Activated naive CD8-positive, alpha-beta T cell treated with anti-CD3 and anti-CD28 coated beads, Interleukin-2, amount 10 ng/mL, durations not matched to agents 7 days and 5 days (primary cell): ENCODE measurements at regions of chr12 and their contacts with region 1.

Region 1: GRCh38 chr12:14769969-14770495 is 33.2 kb downstream of the WBP11 start:
- DNase-seq: peak; percentile 89
- ATAC-seq: peak; percentile 43
- H3K4me3 Mint-ChIP-seq: peak overlapping the region; percentile 94
- H3K27ac Mint-ChIP-seq: peak overlapping the region; percentile 99
- H3K4me1 Mint-ChIP-seq: peaks cover 34% of the 10 kb centered on the region
- H3K27me3 Mint-ChIP-seq: no peaks in the 10 kb centered on the region

Region 2: DNA sequence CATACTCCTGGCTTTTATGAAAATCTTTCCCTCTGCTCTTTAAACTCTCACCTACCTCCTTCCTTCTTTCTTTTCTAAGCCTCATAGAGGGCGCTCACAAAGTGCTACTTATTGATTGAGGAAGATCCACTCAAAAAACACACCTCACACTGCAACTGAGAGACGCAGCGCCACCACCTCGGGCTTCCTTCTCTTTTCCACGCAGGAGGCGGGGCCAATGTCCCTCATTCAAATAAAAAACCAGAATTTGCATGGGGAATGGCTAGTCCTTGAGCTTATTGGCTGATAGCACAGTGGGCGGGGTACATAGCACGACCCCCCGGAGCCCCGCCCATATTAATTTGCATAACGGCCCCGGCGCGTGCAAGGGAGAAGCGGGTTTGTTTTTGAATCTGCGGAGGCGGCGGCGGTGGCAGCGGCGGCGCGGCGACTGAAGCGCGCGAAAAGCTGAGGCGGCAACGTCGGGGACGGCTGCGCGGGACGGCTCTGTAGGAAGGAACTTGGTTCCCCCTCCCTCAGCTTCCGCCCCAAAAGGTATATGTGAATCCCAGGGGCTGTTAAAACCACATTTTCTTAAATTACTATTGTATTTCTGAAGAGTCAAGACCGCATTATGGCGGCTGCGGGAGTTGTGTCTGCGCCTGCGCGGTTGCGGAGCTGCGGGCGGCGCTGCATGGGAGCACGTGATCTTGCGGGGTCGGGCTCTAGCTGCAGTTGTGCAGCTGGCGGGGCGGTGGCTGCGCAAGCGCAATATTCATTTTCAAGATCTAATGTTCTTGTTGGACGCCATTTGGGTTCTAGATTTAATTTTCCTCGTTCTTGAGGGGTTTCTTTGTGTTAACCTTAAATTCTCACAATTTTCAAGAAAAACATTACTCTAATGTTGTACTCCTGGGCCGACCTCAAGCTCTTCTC is 404.5 kb before region 1 on chr12 and contains the start of gene ATF7IP:
- POLR2A ChIA-PET with region 1: interaction called, 30 read pairs
- DNase-seq: peak; percentile 97
- ATAC-seq: peak; percentile 88
- H3K4me3 Mint-ChIP-seq: peak within 1 kb of the TSS; percentile 85
- H3K27ac Mint-ChIP-seq: peak within 1 kb of the TSS; percentile 97
- H3K4me1 Mint-ChIP-seq: peaks cover 19% of the 10 kb centered on the region
- H3K27me3 Mint-ChIP-seq: no peaks in the 10 kb centered on the region
- total RNA-seq, gene ATF7IP: 149 to 172 TPM

Region 3: DNA sequence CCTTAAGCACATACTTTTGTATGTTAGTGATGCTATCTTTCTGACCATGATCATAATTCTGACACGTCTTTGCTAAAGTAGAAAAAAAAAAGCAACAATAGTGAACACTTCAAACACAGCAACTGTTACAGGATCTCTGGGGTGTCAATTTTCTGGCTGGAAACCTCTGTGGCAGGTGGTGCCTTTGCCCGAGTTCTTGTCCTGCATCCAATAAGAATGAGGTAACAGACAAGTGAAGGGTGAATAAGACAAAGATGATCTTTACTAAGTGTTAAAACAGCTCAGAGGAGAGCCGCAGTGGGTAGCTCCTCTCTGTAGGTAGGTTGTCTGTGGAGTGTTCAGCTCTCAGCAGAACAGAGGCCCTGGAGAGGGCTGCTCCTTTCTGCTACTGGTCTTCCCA is 181.5 kb before region 1 on chr12:
- POLR2A ChIA-PET with region 1: no interaction called
- DNase-seq: no peak
- ATAC-seq: no peak
- H3K4me3 Mint-ChIP-seq: no peak overlapping the region
- H3K27ac Mint-ChIP-seq: no peak overlapping the region
- H3K4me1 Mint-ChIP-seq: no peaks in the 10 kb centered on the region
- H3K27me3 Mint-ChIP-seq: no peaks in the 10 kb centered on the region

Region 4: GRCh38 chr12:14782756-14783155 is 12.7 kb after region 1 on chr12:
- POLR2A ChIA-PET with region 1: interaction called, 31 read pairs
- DNase-seq: no peak
- ATAC-seq: no peak
- H3K4me3 Mint-ChIP-seq: no peak overlapping the region
- H3K27ac Mint-ChIP-seq: no peak overlapping the region
- H3K4me1 Mint-ChIP-seq: peaks cover 14% of the 10 kb centered on the region
- H3K27me3 Mint-ChIP-seq: no peaks in the 10 kb centered on the region

Region 5: GRCh38 chr12:14858513-14858912 is 88.5 kb after region 1 on chr12:
- POLR2A ChIA-PET with region 1: no interaction called
- DNase-seq: no peak
- ATAC-seq: no peak
- H3K4me3 Mint-ChIP-seq: no peak overlapping the region
- H3K27ac Mint-ChIP-seq: no peak overlapping the region
- H3K4me1 Mint-ChIP-seq: no peaks in the 10 kb centered on the region
- H3K27me3 Mint-ChIP-seq: no peaks in the 10 kb centered on the region

Region 6: GRCh38 chr12:14948672-14949071 is 178.6 kb after region 1 on chr12:
- POLR2A ChIA-PET with region 1: interaction called, 14 read pairs
- DNase-seq: no peak
- ATAC-seq: peak; percentile 92
- H3K4me3 Mint-ChIP-seq: peak overlapping the region; percentile 87
- H3K27ac Mint-ChIP-seq: peak overlapping the region; percentile 95
- H3K4me1 Mint-ChIP-seq: peaks cover 72% of the 10 kb centered on the region
- H3K27me3 Mint-ChIP-seq: no peaks in the 10 kb centered on the region

Region 7: GRCh38 chr12:14981049-14981448 is 211.0 kb after region 1 on chr12:
- POLR2A ChIA-PET with region 1: interaction called, 10 read pairs
- DNase-seq: no peak
- ATAC-seq: no peak
- H3K4me3 Mint-ChIP-seq: peak overlapping the region; percentile 4
- H3K27ac Mint-ChIP-seq: peak overlapping the region; percentile 1
- H3K4me1 Mint-ChIP-seq: peaks cover 60% of the 10 kb centered on the region
- H3K27me3 Mint-ChIP-seq: no peaks in the 10 kb centered on the region

Region 8: GRCh38 chr12:15575671-15576541 is 805.9 kb after region 1 on chr12:
- POLR2A ChIA-PET with region 1: interaction called, 12 read pairs
- DNase-seq: no peak
- ATAC-seq: no peak
- H3K4me3 Mint-ChIP-seq: no peak overlapping the region
- H3K27ac Mint-ChIP-seq: peak overlapping the region; percentile 57
- H3K4me1 Mint-ChIP-seq: peaks cover 27% of the 10 kb centered on the region
- H3K27me3 Mint-ChIP-seq: no peaks in the 10 kb centered on the region